Activated CD4-positive, alpha-beta T cell treated with anti-CD3 and anti-CD28 coated beads for 36 hours (primary cell): ENCODE measurements at regions of chr3 and their contacts with region 1.

Region 1: DNA sequence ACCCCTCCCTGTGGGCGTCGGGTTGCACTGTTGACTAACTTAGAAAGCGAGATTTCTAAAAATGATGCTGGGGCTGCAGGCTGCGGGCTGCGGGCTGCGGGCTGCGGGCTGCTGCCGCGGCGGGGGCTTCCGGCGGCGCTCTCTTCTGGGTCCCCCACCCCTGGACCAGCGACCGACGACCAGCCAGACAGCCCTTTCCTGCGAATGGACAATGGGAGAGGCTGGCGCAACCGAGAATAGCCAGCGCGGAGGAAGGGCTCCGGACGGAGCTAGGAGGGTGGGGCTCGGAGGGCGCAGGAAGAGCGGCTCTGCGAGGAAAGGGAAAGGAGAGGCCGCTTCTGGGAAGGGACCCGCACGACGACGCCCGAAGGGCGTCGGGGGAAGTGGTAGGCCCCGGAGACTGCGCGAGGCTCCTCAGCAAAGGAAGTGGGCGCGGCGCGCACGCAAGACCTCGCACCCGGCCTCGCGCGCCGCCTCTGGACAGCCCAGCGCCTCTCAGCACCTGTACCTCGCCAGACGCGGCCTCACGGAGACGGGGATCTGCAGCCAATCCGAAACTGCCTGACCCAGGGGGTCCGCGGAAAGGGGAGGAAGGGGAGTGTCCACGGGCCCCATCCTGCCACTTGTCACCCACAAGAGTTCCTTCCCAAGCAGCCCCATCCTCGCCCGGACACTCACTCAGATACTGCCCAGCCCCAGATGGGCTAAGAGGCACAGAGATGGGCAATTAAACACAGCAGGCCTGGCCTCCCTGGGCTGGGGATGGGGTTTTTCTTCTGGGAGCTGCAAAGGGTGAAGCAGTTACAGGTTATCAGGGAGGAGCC is 70.7 kb downstream of the SLC12A8 start:
- DNase-seq: peak; percentile 84
- ATAC-seq: peak; percentile 85
- H3K4me3 Mint-ChIP-seq: peak overlapping the region; percentile 56
- H3K27ac Mint-ChIP-seq: peak overlapping the region; percentile 56
- H3K4me1 Mint-ChIP-seq: peaks cover 28% of the 10 kb centered on the region
- H3K27me3 Mint-ChIP-seq: peaks cover 36% of the 10 kb centered on the region

Region 2: GRCh38 chr3:124995460-124995994 is 146.3 kb before region 1 on chr3:
- CTCF ChIA-PET with region 1: no interaction called
- POLR2A ChIA-PET with region 1: no interaction called
- intact Hi-C with region 1: loop called (anchors 2 to 5 kb)
- DNase-seq: peak; percentile 63
- ATAC-seq: peak; percentile 92
- H3K4me3 Mint-ChIP-seq: no peak overlapping the region
- H3K27ac Mint-ChIP-seq: no peak overlapping the region
- H3K4me1 Mint-ChIP-seq: no peaks in the 10 kb centered on the region
- H3K27me3 Mint-ChIP-seq: no peaks in the 10 kb centered on the region

Region 3: DNA sequence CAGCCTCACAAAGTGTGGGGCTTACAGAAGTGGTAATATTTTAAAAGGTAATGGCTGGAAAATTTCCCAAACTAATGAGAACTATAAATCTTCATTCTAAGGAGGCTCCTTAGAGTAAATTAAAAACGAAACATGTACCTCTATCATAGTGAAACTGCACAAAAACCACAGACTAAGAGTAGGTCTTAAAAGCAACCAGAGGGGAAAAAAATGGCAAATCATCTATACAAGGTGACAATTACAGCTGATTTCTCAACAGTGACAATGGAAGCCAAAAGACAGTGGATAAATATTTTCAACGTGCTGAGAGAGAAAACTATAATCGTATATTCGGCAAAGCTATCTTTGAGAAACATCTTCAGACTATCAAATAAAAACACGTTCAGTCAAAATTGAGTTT is 106.6 kb before region 1 on chr3:
- CTCF ChIA-PET with region 1: interaction called, 3 read pairs
- POLR2A ChIA-PET with region 1: no interaction called
- intact Hi-C with region 1: loop called in 1 of 2 experiments (anchors 1 kb)
- DNase-seq: no peak
- ATAC-seq: peak; percentile 92
- H3K4me3 Mint-ChIP-seq: no peak overlapping the region
- H3K27ac Mint-ChIP-seq: peak overlapping the region; percentile 10
- H3K4me1 Mint-ChIP-seq: peaks cover 22% of the 10 kb centered on the region
- H3K27me3 Mint-ChIP-seq: no peaks in the 10 kb centered on the region

Region 4: GRCh38 chr3:125107861-125108567 is 33.8 kb before region 1 on chr3:
- CTCF ChIA-PET with region 1: no interaction called
- POLR2A ChIA-PET with region 1: no interaction called
- intact Hi-C with region 1: loop called (anchors 1 to 2 kb)
- DNase-seq: no peak
- ATAC-seq: peak; percentile 59
- H3K4me3 Mint-ChIP-seq: no peak overlapping the region
- H3K27ac Mint-ChIP-seq: no peak overlapping the region
- H3K4me1 Mint-ChIP-seq: peaks cover 33% of the 10 kb centered on the region
- H3K27me3 Mint-ChIP-seq: peaks cover 22% of the 10 kb centered on the region

Region 5: DNA sequence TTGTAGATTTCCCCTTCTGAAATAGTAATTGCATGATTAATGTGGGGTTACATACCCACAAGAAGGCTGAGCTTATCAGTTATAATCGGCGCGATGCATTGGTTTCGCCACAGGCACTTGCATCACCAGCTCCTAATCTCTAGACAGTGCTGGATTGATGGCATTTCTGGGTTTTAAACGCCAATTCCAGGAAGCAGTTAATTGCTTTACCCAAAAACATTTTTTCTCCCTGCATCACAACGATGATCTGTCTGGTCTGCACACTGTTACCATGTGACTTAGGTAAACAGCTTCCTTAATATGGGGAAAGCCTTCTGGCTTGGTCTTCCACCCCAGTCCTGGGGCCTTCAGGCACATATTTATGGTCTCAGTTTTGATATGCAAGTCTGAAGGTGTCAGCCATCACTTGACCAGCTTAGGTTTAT is 16.0 kb before region 1 on chr3:
- CTCF ChIA-PET with region 1: interaction called, 4 read pairs
- POLR2A ChIA-PET with region 1: no interaction called
- intact Hi-C with region 1: loop called in 1 of 2 experiments (anchors 2 kb)
- DNase-seq: peak; percentile 58
- ATAC-seq: peak; percentile 79
- H3K4me3 Mint-ChIP-seq: no peak overlapping the region
- H3K27ac Mint-ChIP-seq: no peak overlapping the region
- H3K4me1 Mint-ChIP-seq: peaks cover 28% of the 10 kb centered on the region
- H3K27me3 Mint-ChIP-seq: peaks cover 2% of the 10 kb centered on the region

Region 6: DNA sequence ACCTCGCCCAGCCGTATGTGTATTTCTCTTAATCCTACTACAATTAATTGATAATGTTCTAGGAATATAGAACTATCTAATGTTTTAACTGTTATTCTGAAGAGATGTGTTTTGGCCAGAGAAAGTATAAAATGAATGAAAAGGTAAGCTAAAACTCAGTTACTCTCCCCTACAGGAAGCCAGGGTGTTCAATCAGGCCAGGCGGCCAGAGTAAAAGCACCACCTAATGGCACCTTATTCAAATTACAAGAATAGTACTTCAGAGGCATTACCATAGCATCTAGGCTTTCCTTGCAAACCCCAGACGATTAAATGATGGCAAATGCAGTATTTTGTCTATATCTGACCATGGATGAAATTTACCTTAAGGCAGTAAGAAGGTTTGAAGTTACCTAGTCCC is 60.4 kb after region 1 on chr3:
- CTCF ChIA-PET with region 1: no interaction called
- POLR2A ChIA-PET with region 1: no interaction called
- intact Hi-C with region 1: loop called in 1 of 2 experiments (anchors 5 kb)
- DNase-seq: peak; percentile 35
- ATAC-seq: peak; percentile 74
- H3K4me3 Mint-ChIP-seq: no peak overlapping the region
- H3K27ac Mint-ChIP-seq: no peak overlapping the region
- H3K4me1 Mint-ChIP-seq: no peaks in the 10 kb centered on the region
- H3K27me3 Mint-ChIP-seq: peaks cover 9% of the 10 kb centered on the region